B cell (primary cell): ENCODE measurements at regions of chr13 and their contacts with region 1.

Region 1: DNA sequence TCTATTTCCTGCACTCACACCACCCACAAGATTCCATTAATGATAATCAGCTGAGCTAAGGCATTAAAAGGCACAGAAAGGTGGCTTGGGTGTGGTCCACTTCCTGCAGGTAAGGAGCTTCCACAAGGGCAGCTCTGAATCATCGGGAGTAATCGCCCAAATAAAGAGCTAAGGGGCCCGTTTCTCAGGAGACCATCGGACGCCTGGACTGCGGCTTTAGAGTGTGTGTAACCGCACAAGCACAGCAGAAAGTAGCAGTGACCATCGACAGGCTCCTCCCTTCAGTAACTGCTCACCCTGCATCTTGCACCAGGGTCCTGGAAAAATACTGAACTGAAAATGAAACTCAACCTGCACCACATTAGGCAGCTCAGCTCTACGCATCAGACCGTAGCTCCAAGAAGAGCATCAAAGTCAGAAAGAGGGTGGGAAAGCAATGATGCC is 6.0 kb downstream of the STK24 start:
- DNase-seq: peak; percentile 80
- ATAC-seq: peak; percentile 88
- H3K4me3 ChIP-seq: peak overlapping the region; percentile 41 to 73 (median 43)
- H3K4me3 Mint-ChIP-seq: peak overlapping the region; percentile 91
- H3K27ac ChIP-seq: peak overlapping the region; percentile 78
- H3K27ac Mint-ChIP-seq: peak overlapping the region; percentile 95
- H3K4me1 ChIP-seq: peaks cover 85 to 90% of the 10 kb centered on the region in 2 donors
- H3K4me1 Mint-ChIP-seq: peaks cover 93% of the 10 kb centered on the region
- H3K27me3 ChIP-seq: no peaks in the 10 kb centered on the region
- H3K27me3 Mint-ChIP-seq: no peaks in the 10 kb centered on the region
- CTCF ChIP-seq: no peak

Region 2: GRCh38 chr13:98476538-98476966 is 94.4 kb before region 1 on chr13:
- CTCF ChIA-PET with region 1: interaction called, 7 read pairs
- POLR2A ChIA-PET with region 1: interaction called, 7 read pairs
- intact Hi-C with region 1: loop called (anchors 1 kb)
- DNase-seq: peak; percentile 71
- ATAC-seq: peak; percentile 94
- H3K4me3 ChIP-seq: peak overlapping the region in 2 of 5 experiments; percentile 0 to 2
- H3K4me3 Mint-ChIP-seq: peak overlapping the region; percentile 76
- H3K27ac ChIP-seq: peak overlapping the region; percentile 33 to 76
- H3K27ac Mint-ChIP-seq: peak overlapping the region; percentile 85
- H3K4me1 ChIP-seq: peaks cover 38 to 42% of the 10 kb centered on the region in 2 donors
- H3K4me1 Mint-ChIP-seq: peaks cover 45% of the 10 kb centered on the region
- H3K27me3 ChIP-seq: no peaks in the 10 kb centered on the region
- H3K27me3 Mint-ChIP-seq: no peaks in the 10 kb centered on the region
- CTCF ChIP-seq: no peak